Endothelial cell of umbilical vein (primary cell): ENCODE measurements at regions of chr11 and their contacts with region 1.

Region 1: DNA sequence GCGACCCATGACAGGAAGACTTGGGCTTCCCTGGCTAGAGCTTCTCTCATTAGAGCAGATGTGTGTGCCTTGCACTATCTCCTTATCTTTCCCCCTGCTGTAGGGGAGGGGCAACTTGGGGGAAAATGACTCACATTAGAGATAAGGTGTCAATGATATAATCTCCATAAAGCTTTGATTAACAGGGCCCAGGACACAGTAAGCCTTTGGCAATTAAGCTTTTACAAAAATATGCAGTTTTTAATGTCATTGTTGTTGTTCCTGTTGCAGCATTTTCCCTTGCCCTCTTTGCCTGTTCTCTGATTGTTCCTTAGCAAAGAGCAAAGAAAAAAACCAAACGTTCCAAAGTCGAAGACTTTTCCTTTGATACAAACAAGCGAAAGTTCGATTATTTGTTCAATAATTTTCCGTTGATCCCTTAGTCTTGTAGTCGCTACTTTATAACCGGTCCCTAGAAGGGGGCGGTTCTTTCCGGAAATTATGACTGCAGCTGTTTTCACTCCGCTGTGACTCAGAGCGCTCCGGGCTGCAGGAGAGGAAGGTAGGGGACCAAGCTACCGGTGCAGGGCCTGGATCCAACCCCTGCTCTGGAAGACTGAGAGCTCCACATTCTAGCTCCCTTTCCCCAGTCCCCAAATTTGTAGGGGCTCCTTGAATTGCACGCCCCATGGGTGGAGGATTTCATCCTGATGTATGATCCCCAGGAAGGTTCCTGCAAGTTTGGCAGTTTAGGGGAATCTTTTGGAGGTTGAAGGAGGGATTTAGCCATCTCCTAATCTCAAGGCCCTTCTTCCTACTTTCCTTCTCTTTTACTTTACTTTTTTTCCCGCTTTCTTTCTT is at the start of gene VWA5A:
- DNase-seq: peak; percentile 86
- H3K4me3 ChIP-seq: peak within 1 kb of the TSS; percentile 54 to 94 (median 75)
- H3K27ac ChIP-seq: peak within 1 kb of the TSS; percentile 52
- H3K4me1 ChIP-seq: peaks cover 19% of the 10 kb centered on the region
- H3K27me3 ChIP-seq: no peaks in the 10 kb centered on the region
- CTCF ChIP-seq: no peak
- POLR2A ChIP-seq: peak; percentile 88
- total RNA-seq, gene VWA5A: 11.6 and 14.3 TPM in 2 replicates

Region 2: DNA sequence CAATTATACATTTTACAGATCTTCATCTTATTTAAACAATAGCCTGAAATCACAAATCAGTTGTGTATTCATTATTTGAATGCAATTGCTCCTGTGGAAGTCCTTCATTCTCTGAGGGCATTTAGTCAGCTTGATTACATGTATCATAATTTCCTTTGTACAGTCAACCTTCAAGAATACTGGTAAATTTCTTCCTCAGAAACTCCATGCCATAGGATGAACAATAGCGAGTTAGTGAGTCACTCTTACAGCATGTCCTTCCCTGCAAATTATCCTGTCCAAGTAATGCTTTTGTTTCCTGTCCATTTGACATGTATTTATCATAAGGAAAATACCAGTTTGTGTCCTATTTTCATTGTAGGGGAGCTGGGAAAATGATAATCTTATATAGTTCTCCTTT is 141.3 kb before region 1 on chr11:
- CTCF ChIA-PET with region 1: no interaction called
- POLR2A ChIA-PET with region 1: no interaction called
- dilution Hi-C with region 1: no loop called
- intact Hi-C with region 1: loop called (anchors 5 kb)
- DNase-seq: peak; percentile 96
- H3K4me3 ChIP-seq: no peak overlapping the region
- H3K27ac ChIP-seq: peak overlapping the region; percentile 93
- H3K4me1 ChIP-seq: peaks cover 24% of the 10 kb centered on the region
- H3K27me3 ChIP-seq: no peaks in the 10 kb centered on the region
- CTCF ChIP-seq: no peak
- POLR2A ChIP-seq: peak; percentile 54

Region 3: GRCh38 chr11:123995119-123995518 is 120.0 kb before region 1 on chr11 and contains the start of gene OR10G6:
- CTCF ChIA-PET with region 1: no interaction called
- POLR2A ChIA-PET with region 1: no interaction called
- dilution Hi-C with region 1: no loop called
- intact Hi-C with region 1: no loop called
- DNase-seq: no peak
- H3K4me3 ChIP-seq: no peak within 1 kb of the TSS
- H3K27ac ChIP-seq: no peak within 1 kb of the TSS
- H3K4me1 ChIP-seq: peaks cover under 1% of the 10 kb centered on the region
- H3K27me3 ChIP-seq: peaks cover 0 to 3% of the 10 kb centered on the region in 2 experiments
- CTCF ChIP-seq: no peak
- POLR2A ChIP-seq: no peak
- total RNA-seq, gene OR10G6: not detected in 2 replicates

Region 4: DNA sequence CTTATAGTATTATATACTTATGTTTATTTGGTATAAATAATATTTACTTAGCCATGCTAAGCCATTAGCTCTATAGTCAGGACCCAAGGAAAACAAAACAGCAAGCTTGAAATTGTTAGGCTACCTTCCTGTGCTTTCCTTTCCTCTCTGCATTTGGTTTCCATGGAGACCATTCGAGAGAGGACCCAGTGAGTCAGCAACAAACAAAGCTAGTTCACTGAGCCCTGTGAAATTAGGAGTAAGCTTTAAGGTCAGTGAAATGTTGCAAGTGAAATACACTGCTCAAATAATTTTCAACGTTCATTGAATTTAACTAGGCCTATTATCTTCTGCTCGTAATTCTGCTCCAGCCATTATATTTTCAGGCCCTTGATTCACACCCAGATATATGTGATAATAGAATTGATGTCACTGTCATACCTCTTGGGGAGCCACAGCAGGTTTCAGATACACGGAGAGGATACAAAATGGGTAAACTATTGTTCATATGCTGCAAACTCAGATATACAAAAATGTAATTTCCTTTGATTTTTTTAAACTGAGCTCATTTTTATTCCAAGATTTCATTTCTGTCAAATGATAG is 58.9 kb after region 1 on chr11:
- CTCF ChIA-PET with region 1: interaction called, 15 read pairs
- POLR2A ChIA-PET with region 1: no interaction called
- dilution Hi-C with region 1: no loop called
- intact Hi-C with region 1: loop called (anchors 2 kb)
- DNase-seq: peak; percentile 83
- H3K4me3 ChIP-seq: no peak overlapping the region
- H3K27ac ChIP-seq: no peak overlapping the region
- H3K4me1 ChIP-seq: peaks cover 5% of the 10 kb centered on the region
- H3K27me3 ChIP-seq: no peaks in the 10 kb centered on the region
- CTCF ChIP-seq: no peak
- POLR2A ChIP-seq: no peak

Region 5: DNA sequence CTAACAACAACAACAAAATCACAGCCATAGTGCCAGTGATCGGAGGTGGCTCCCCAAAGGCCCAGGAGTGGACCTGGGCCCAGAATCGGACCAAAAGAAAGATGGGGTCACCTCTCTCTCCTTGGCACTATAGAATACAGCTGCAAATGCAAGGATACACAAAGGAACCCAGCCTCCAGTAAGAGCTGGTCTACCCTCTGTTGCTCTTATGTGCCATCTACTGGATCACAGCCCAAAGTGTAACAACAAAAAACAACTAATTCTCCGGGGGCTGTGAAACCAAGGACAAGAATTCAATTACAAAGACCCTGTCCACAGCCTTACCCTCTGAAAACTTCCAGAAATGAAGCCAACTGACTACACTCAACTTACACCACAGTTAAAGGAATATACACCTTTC is 162.6 kb after region 1 on chr11:
- CTCF ChIA-PET with region 1: interaction called, 3 read pairs
- POLR2A ChIA-PET with region 1: no interaction called
- dilution Hi-C with region 1: no loop called
- intact Hi-C with region 1: loop called (anchors 1 kb)
- DNase-seq: no peak
- H3K4me3 ChIP-seq: no peak overlapping the region
- H3K27ac ChIP-seq: no peak overlapping the region
- H3K4me1 ChIP-seq: peaks cover 15% of the 10 kb centered on the region
- H3K27me3 ChIP-seq: no peaks in the 10 kb centered on the region
- CTCF ChIP-seq: peak in 1 of 2 donors; percentile 2
- POLR2A ChIP-seq: no peak